ENCODE measurements at regions of chr10 and their contacts with region 1.

Region 1: DNA sequence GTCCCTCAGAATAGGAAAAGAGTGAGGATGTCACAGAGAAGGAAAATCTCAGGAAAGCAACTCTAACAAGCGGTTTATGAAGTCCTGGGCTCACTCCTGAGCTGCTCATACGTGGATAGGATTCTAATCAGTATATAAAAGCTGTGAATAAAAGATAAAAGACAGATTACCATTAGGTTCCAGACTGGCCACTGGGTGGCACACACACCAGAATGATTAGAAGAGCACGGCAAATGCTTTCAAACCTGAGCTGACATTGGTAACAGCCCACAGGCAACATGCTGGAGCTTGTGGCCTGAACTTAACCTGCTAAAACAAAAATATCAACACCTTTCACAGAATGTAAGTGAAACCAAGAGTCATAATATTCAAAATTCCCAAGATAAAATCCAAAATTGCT is 370.8 kb downstream of the GRID1 start:
- DNase-seq: peak; percentile 50
- H3K4me3 ChIP-seq: no peak overlapping the region
- H3K27ac ChIP-seq: no peak overlapping the region
- H3K4me1 ChIP-seq: no peaks in the 10 kb centered on the region
- H3K27me3 ChIP-seq: peaks cover 38% of the 10 kb centered on the region
- CTCF ChIP-seq: peak; percentile 62

Region 2: GRCh38 chr10:85655411-85655810 is 340.4 kb before region 1 on chr10:
- CTCF ChIA-PET with region 1: no interaction called
- POLR2A ChIA-PET with region 1: no interaction called
- intact Hi-C with region 1: no loop called
- DNase-seq: no peak
- H3K4me3 ChIP-seq: no peak overlapping the region
- H3K27ac ChIP-seq: no peak overlapping the region
- H3K4me1 ChIP-seq: no peaks in the 10 kb centered on the region
- H3K27me3 ChIP-seq: peaks cover 2% of the 10 kb centered on the region
- CTCF ChIP-seq: no peak

Region 3: DNA sequence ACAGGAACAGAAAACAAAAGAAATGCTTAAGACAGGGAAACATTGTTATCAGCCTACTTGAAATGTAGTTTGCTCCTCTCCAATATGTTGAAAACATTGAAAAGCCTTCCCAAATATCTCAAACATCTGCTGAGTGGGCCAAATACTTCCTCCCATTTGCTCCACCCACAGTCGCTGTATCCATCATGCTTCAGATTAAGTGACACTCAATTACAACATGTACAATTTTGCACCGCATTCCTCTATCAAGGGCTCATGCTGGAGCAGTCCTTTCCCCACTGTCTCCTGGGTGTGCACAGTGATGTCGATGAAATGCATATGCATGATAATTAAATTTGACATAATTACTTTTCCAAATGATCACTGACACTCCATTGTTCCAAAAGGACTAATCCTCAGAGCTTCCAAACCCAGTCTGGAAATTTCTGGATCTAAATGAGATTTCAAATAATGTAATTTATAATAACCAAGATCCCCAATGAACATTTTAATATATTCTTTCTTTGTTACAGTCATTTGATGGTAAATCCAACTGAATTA is 233.8 kb before region 1 on chr10:
- CTCF ChIA-PET with region 1: no interaction called
- POLR2A ChIA-PET with region 1: no interaction called
- intact Hi-C with region 1: no loop called
- DNase-seq: no peak
- H3K4me3 ChIP-seq: no peak overlapping the region
- H3K27ac ChIP-seq: no peak overlapping the region
- H3K4me1 ChIP-seq: no peaks in the 10 kb centered on the region
- H3K27me3 ChIP-seq: peaks cover 10% of the 10 kb centered on the region
- CTCF ChIP-seq: no peak

Region 4: DNA sequence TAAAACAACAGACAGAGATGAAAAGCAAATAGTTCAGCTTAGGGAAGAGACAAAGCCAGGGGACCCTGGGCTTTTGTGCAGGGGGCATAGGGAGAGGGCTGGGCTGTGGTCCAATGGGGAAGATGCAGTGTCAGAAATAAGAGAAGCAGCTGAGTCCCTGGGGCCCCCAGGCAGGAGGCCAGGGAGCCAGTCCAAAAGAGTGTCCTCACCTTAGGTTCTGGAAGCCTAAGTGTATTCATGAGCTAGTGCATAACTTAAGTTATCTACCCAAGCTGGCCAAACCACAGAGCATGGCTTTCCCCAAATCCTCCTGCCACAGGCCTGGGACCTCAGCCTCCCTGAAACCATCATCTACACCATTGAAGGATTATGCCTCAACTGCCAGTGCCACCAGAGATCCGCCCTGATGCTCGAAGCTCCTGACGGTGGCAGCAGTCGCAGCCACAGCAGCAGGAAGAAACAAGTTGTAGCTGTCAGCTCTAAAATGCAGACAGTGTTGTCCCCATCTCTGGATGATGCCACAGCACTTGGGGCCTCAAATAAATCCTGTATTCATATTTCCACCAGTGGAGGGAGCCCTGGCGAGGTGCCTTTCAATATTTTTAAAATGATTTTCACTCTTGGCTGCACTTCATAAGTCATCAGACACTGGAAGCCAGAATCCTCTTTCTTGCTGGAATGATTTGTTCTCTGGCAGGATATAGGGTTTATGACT is 203.8 kb before region 1 on chr10:
- CTCF ChIA-PET with region 1: no interaction called
- POLR2A ChIA-PET with region 1: no interaction called
- intact Hi-C with region 1: loop called (anchors 5 kb)
- DNase-seq: peak; percentile 19
- H3K4me3 ChIP-seq: no peak overlapping the region
- H3K27ac ChIP-seq: no peak overlapping the region
- H3K4me1 ChIP-seq: no peaks in the 10 kb centered on the region
- H3K27me3 ChIP-seq: no peaks in the 10 kb centered on the region
- CTCF ChIP-seq: peak; percentile 40; the same call in 1 of the 2 replicates

Region 5: GRCh38 chr10:86585037-86585725 is 589.4 kb after region 1 on chr10:
- CTCF ChIA-PET with region 1: no interaction called
- POLR2A ChIA-PET with region 1: no interaction called
- intact Hi-C with region 1: loop called (anchors 10 kb)
- DNase-seq: peak; percentile 76
- H3K4me3 ChIP-seq: no peak overlapping the region
- H3K27ac ChIP-seq: no peak overlapping the region
- H3K4me1 ChIP-seq: no peaks in the 10 kb centered on the region
- H3K27me3 ChIP-seq: no peaks in the 10 kb centered on the region
- CTCF ChIP-seq: peak; percentile 98